ENCODE measurements at regions of chr12 and their contacts with region 1.

Region 1: GRCh38 chr12:63766498-63766897 is 13.2 kb upstream of the RXYLT1 start:
- DNase-seq: no peak
- H3K4me3 Mint-ChIP-seq: no peak overlapping the region
- H3K27ac Mint-ChIP-seq: no peak overlapping the region
- H3K4me1 Mint-ChIP-seq: no peaks in the 10 kb centered on the region
- H3K27me3 Mint-ChIP-seq: peaks cover 11% of the 10 kb centered on the region

Region 2: DNA sequence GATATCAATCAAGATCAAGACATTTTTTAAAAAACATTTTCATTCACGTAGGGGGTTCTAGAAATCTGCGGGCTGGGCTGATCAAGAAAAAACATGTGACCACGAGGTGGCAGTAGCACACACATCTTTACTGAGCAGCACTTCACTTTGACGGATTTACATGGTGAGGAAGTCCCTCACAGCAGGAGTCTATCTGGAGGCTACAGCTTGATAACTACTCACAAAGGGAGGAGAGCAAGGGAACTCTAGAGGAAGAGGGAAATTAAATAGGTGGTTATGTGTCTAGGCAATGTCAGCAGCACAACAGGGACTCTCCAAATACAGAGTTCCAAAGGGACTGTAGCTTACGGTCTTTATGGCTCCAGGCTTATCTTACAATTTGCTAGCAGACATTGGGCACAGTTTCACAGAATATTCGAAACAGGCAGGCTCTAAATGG is 346.3 kb before region 1 on chr12:
- CTCF ChIA-PET with region 1: no interaction called
- intact Hi-C with region 1: no loop called
- DNase-seq: peak; percentile 45
- H3K4me3 Mint-ChIP-seq: no peak overlapping the region
- H3K27ac Mint-ChIP-seq: no peak overlapping the region
- H3K4me1 Mint-ChIP-seq: no peaks in the 10 kb centered on the region
- H3K27me3 Mint-ChIP-seq: no peaks in the 10 kb centered on the region

Region 3: DNA sequence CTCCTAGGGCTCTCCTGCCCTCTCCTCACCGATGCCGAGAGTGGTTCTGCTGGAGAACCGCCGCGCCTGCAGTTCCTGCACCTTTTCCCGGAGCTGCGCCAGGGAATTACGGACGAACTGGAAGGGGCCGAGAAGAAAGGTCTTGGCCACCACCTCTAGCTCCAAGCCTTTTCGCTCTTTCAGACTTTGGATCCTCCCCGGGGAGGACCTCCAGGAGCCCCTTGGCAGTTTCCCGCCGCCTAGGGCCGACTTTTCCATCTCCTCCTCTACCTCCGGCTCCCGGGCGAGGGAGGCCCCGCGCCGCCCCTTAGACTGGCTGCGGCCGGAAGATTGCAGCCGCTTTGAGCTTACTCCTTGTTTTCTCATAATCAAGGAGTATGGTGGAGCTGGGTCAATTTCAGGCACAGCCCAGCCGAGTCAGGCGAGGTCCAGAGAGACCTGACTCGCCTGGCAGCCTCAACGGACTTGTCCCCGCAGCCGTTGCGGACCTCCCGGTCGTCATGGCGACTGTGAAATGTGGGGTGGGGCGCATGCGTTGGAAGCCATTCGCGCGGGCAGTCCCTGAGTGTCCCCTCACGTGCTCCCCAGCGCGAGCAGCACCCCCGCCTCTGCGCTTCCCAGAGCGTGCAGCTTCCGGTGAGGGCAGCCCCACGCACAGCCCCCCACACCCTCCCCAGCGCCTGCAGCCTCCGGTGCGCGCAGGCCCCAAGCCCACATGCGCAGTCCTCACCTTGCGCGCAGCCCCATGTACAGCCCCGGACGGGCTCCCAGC is 98.3 kb before region 1 on chr12 and contains the start of gene DPY19L2:
- CTCF ChIA-PET with region 1: interaction called, 3 read pairs
- intact Hi-C with region 1: loop called (anchors 2 kb)
- DNase-seq: peak; percentile 69
- H3K4me3 Mint-ChIP-seq: peak within 1 kb of the TSS; percentile 79
- H3K27ac Mint-ChIP-seq: peak within 1 kb of the TSS; percentile 36
- H3K4me1 Mint-ChIP-seq: peaks cover 10% of the 10 kb centered on the region
- H3K27me3 Mint-ChIP-seq: peaks cover 29% of the 10 kb centered on the region
- total RNA-seq, gene DPY19L2: 0.91 to 1.1 TPM